AG04450 (cell line): ENCODE measurements at regions of chr17 and their contacts with region 1.

Region 1: GRCh38 chr17:35808962-35809854 is at the start of gene TAF15:
- DNase-seq: peak; percentile 96
- H3K4me3 ChIP-seq: peak within 1 kb of the TSS; percentile 99
- H3K27ac ChIP-seq: peak within 1 kb of the TSS; percentile 91
- H3K27me3 ChIP-seq: no peaks in the 10 kb centered on the region
- CTCF ChIP-seq: peak; percentile 78
- polyA plus RNA-seq, gene TAF15: 51.6 and 66.1 TPM in 2 replicates

Region 2: DNA sequence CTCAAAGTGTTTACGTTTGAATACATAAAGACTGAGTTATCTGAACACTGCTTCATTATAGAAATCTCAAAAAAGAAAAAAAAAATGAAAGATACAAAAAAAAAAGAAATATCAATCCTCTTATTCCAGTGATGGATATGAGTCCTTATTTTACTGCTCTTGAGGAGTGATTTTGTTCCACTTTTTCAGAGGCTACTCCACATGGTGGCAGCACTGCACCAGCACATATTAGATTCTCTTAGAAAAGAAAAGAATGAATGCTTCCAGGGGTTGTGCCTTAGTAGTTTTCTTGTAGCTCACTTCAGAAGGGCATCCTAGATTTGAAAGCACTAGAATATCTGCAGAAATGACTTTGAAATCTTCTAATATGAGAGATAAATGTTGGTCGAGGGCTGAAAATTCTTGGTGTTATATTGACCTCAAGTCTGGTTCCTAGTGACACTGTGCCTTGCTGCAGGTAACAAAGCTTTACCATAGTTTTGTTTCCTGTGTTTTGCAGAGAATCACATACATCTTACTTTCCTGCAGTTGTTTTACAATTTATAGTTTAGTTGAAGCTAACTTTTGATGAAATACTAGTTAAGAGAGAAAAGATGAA is 196.2 kb before region 1 on chr17:
- CTCF ChIA-PET with region 1: interaction called, 28 read pairs
- POLR2A ChIA-PET with region 1: no interaction called
- DNase-seq: no peak
- H3K4me3 ChIP-seq: no peak overlapping the region
- H3K27ac ChIP-seq: no peak overlapping the region
- H3K27me3 ChIP-seq: no peaks in the 10 kb centered on the region
- CTCF ChIP-seq: peak; percentile 71

Region 3: DNA sequence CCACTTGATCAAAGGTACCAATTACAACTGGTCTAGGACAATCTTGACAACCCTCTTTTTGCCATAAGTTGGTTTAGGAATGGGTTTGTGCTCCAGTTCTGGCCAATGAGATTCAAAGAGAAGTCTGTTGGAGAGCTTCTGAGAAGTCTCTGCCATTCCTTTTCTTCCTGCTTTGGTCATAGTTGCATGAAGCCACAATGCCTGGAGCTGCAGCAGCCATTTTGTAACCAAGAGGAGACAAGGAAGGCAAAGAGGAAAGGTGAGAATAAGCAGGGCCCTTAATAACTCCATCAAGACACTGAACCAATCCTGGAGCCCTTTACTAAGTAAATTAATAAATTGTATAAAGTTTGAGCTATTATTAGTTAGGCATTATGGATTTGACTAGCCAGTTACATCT is 52.0 kb before region 1 on chr17:
- CTCF ChIA-PET with region 1: interaction called, 478 read pairs
- POLR2A ChIA-PET with region 1: interaction called, 3 read pairs
- DNase-seq: no peak
- H3K4me3 ChIP-seq: no peak overlapping the region
- H3K27ac ChIP-seq: no peak overlapping the region
- H3K27me3 ChIP-seq: peaks cover 30% of the 10 kb centered on the region
- CTCF ChIP-seq: no peak

Region 4: DNA sequence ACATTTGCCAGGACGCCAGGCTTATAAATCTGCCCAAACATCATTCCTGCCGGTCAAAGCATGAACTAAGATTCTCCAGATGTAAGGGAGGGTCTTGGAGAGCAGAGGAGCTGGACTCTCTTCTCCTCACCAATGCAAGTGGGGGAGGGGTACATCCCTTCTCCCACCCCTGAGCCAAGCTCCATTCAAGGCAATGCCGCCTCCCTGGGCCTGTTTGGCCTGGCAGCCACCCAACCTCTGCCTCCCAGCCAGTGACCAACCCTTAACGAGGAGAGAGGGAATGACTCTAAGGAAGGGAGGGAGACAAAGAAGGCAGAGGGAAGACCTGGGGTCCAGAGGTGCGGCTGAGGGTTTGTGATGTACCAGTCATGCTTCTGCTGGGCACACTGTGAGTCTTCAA is 34.7 kb before region 1 on chr17:
- CTCF ChIA-PET with region 1: interaction called, 478 read pairs
- POLR2A ChIA-PET with region 1: interaction called, 9 read pairs
- DNase-seq: no peak
- H3K4me3 ChIP-seq: no peak overlapping the region
- H3K27ac ChIP-seq: no peak overlapping the region
- H3K27me3 ChIP-seq: peaks cover 19% of the 10 kb centered on the region
- CTCF ChIP-seq: no peak

Region 5: DNA sequence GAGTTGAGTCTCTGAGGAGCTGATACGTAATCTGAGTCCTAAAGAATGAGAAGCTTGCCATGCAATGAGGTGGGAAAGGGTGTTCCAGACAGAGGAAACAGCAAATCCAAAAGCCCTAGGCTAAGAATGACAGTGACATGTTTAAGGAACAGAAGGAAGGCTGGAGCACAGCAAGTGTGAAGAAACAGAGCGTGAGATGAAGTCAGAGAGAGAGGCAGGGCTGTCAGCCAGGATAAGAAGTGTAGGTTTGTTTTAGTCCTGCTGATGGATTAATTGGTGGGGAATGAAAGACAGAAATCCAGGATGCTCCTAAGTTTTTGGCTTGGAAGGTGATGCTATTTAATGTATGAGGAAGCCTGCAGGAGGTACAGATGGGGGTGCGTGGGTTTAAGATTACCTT is 28.3 kb before region 1 on chr17:
- CTCF ChIA-PET with region 1: interaction called, 64 read pairs
- POLR2A ChIA-PET with region 1: interaction called, 9 read pairs
- DNase-seq: no peak
- H3K4me3 ChIP-seq: no peak overlapping the region
- H3K27ac ChIP-seq: no peak overlapping the region
- H3K27me3 ChIP-seq: peaks cover 14% of the 10 kb centered on the region
- CTCF ChIP-seq: no peak

Region 6: GRCh38 chr17:35788504-35789368 is 20.5 kb before region 1 on chr17:
- CTCF ChIA-PET with region 1: interaction called, 64 read pairs
- POLR2A ChIA-PET with region 1: interaction called, 13 read pairs
- DNase-seq: no peak
- H3K4me3 ChIP-seq: no peak overlapping the region
- H3K27ac ChIP-seq: peak overlapping the region; percentile 73
- H3K27me3 ChIP-seq: peaks cover 12% of the 10 kb centered on the region
- CTCF ChIP-seq: no peak

Region 7: GRCh38 chr17:35825206-35825605 is 16.0 kb after region 1 on chr17:
- CTCF ChIA-PET with region 1: interaction called, 15 read pairs
- POLR2A ChIA-PET with region 1: no interaction called
- DNase-seq: no peak
- H3K4me3 ChIP-seq: no peak overlapping the region
- H3K27ac ChIP-seq: no peak overlapping the region
- H3K27me3 ChIP-seq: no peaks in the 10 kb centered on the region
- CTCF ChIP-seq: no peak